Activated CD4-positive, alpha-beta T cell treated with anti-CD3 and anti-CD28 coated beads for 36 hours (primary cell): ENCODE measurements at regions of chr7 and their contacts with region 1.

Region 1: GRCh38 chr7:139620676-139621344 is 97.3 kb downstream of the CLEC2L start:
- DNase-seq: peak; percentile 82
- ATAC-seq: peak; percentile 89
- H3K4me3 Mint-ChIP-seq: no peak overlapping the region
- H3K27ac Mint-ChIP-seq: no peak overlapping the region
- H3K4me1 Mint-ChIP-seq: peaks cover 27% of the 10 kb centered on the region
- H3K27me3 Mint-ChIP-seq: no peaks in the 10 kb centered on the region

Region 2: DNA sequence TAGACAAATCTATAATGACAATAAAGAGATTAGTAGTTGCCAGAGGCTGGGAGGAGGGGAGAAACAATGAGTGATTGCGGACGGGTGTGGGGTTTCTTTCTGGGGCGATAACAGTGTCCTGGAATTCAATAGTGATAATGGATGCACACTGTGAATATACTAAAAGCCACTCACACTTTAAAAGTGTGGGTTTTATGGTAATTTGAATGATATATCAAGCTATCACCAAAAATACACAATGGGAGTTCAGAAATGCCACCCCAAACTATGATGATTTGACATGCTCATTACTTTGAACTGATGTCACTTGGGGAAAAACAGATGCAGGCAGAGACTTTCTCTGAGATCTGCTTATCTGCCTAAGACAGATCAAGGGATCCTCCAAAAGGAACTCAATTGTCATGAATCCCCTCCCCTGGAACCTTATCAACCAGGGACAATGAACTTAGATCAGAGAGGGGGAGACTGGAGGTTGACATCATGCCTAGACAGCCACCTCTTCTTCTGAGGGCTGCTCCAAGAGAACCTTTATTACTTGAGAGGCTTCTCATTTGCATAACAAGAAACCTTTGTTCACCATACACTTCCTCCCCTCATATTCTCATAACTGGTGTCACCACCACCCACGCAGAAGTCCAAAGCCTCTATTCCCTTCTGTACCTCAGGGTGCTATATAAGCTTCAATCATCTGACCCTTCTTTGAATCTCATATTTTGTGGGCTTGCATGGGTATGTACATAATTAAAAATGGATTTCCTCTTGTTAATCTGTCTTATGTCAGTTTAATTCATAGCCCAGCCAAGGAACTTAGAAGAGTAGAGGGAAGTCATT is 496.5 kb before region 1 on chr7:
- CTCF ChIA-PET with region 1: no interaction called
- POLR2A ChIA-PET with region 1: no interaction called
- intact Hi-C with region 1: no loop called
- DNase-seq: peak; percentile 51
- ATAC-seq: peak; percentile 85
- H3K4me3 Mint-ChIP-seq: no peak overlapping the region
- H3K27ac Mint-ChIP-seq: peak overlapping the region; percentile 66
- H3K4me1 Mint-ChIP-seq: peaks cover 37% of the 10 kb centered on the region
- H3K27me3 Mint-ChIP-seq: no peaks in the 10 kb centered on the region

Region 3: GRCh38 chr7:139502226-139502625 is 118.6 kb before region 1 on chr7:
- CTCF ChIA-PET with region 1: interaction called, 3 read pairs
- POLR2A ChIA-PET with region 1: no interaction called
- intact Hi-C with region 1: loop called in 1 of 2 experiments (anchors 2 kb)
- DNase-seq: no peak
- ATAC-seq: no peak
- H3K4me3 Mint-ChIP-seq: no peak overlapping the region
- H3K27ac Mint-ChIP-seq: no peak overlapping the region
- H3K4me1 Mint-ChIP-seq: peaks cover 4% of the 10 kb centered on the region
- H3K27me3 Mint-ChIP-seq: peaks cover 2% of the 10 kb centered on the region

Region 4: DNA sequence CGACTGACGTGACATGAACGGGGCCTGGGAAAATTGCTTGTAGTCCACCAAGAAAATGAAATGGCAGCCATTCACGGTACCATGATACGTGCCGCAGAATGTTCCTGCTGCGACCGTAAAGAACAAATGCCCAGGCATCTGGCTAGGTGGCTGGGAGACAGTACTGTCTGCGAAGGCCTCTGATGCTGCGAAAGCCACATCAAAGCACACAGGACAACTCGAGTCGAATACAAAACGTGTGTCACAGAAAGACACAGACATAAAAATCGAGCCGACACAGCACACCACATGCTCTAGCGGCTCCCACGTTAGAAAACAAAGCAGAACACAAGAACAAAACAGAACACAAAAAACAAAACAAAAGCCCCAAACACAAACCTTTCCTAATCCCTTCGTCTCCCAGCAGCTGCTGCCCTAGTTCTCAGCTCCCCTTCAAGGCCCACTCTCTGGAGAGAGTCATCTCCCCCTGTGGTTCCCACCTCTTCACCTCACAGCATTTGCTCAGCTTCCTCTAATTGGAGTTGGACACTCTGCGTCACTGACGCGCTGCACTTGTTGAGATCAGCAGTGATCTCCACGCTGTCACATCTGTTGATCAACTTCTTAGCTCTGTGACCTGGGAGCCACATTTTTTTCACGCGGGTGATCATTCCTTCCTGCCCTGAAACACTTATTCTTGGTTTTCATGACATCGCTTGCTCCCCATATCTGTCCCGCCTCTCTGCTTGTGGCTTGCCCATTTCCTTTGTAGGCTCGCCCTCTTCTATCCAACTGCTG is 14.9 kb after region 1 on chr7:
- CTCF ChIA-PET with region 1: interaction called, 13 read pairs
- POLR2A ChIA-PET with region 1: interaction called, 3 read pairs
- intact Hi-C with region 1: no loop called
- DNase-seq: peak; percentile 88
- ATAC-seq: peak; percentile 93
- H3K4me3 Mint-ChIP-seq: peak overlapping the region; percentile 74
- H3K27ac Mint-ChIP-seq: peak overlapping the region; percentile 96
- H3K4me1 Mint-ChIP-seq: peaks cover 66% of the 10 kb centered on the region
- H3K27me3 Mint-ChIP-seq: no peaks in the 10 kb centered on the region

Region 5: DNA sequence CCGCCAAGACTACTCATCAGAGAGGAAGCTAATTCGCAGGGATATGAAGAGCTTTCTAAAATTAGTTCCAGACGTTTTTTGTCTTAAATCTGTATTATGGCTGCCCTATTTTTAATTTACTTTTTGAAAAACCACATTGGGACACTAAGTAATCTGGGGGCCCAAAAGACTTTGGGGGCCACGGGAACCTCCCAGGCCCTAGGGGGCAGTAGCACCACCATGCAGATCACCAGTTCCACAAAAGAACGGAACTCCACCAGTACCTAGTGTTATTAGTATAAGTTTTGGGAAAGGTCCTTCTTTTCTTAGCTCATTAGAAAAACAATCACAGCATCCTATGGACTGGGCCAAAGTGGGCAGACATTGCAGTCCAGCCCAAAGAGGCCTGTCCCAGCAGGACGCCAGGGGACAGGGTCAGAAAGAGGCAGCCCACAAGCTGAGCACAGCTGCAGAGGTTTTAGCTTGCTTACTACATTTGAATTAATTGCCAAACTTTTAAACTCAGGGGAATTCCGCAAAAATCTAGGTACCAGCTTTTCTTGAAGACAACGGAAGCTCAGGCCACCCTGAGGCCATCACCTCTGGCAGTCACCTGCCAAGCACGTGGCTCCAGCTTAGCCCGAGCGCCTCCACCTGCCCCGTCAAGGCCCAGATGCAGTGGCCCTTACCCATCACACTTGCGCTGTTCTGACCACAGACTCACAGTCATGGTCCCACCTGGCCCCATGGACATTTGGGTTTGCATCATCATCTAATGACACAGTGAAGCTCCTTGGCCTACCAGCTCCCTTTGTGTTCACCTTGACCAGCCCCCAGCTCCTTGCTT is 367.1 kb after region 1 on chr7:
- CTCF ChIA-PET with region 1: interaction called, 11 read pairs
- POLR2A ChIA-PET with region 1: no interaction called
- intact Hi-C with region 1: no loop called
- DNase-seq: no peak
- ATAC-seq: no peak
- H3K4me3 Mint-ChIP-seq: no peak overlapping the region
- H3K27ac Mint-ChIP-seq: no peak overlapping the region
- H3K4me1 Mint-ChIP-seq: no peaks in the 10 kb centered on the region
- H3K27me3 Mint-ChIP-seq: no peaks in the 10 kb centered on the region

Region 6: GRCh38 chr7:140003913-140004382 is 383.1 kb after region 1 on chr7:
- CTCF ChIA-PET with region 1: interaction called, 23 read pairs
- POLR2A ChIA-PET with region 1: no interaction called
- intact Hi-C with region 1: loop called (anchors 1 to 2 kb)
- DNase-seq: peak; percentile 53
- ATAC-seq: peak; percentile 16
- H3K4me3 Mint-ChIP-seq: no peak overlapping the region
- H3K27ac Mint-ChIP-seq: no peak overlapping the region
- H3K4me1 Mint-ChIP-seq: no peaks in the 10 kb centered on the region
- H3K27me3 Mint-ChIP-seq: no peaks in the 10 kb centered on the region

Region 7: DNA sequence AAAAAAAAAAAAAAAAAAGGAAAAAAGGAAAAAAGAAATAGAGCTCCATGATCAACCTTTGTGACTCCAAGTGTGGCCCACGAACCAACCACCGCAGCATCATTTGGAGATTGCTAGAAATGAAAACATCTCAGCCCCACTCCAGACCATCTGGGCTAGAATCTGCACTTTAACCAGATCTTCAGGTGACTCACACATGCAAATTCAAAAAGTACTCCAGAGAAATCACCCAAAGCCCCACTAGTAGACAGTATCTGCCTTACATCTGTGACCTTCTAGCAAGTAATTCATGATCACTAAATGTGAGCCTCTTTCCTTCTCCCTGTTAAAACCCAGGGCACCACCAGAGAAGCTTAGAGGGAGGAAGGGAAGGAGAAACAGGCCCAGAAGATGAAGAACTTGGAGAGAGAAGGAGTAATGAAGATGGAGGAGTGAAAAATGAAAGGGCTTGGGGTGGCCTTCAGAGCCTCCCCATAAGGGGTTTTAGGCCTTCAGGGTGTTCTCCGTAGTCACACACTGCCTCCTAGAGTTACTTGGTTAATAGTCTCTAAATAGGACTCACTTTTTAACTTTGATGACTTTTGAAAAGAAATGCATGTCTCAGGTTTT is 683.5 kb after region 1 on chr7:
- CTCF ChIA-PET with region 1: no interaction called
- POLR2A ChIA-PET with region 1: no interaction called
- intact Hi-C with region 1: loop called in 1 of 2 experiments (anchors 10 kb)
- DNase-seq: peak; percentile 56
- ATAC-seq: peak; percentile 95
- H3K4me3 Mint-ChIP-seq: no peak overlapping the region
- H3K27ac Mint-ChIP-seq: peak overlapping the region; percentile 83
- H3K4me1 Mint-ChIP-seq: peaks cover 16% of the 10 kb centered on the region
- H3K27me3 Mint-ChIP-seq: no peaks in the 10 kb centered on the region